Dorsolateral prefrontal cortex (tissue), 120 donors: ENCODE measurements at regions of chr1 and their contacts with region 1.

Region 1: GRCh38 chr1:156659994-156660751 is 17.0 kb downstream of the NES start:
- DNase-seq: peak; percentile 87 to 94 (median 92)
- H3K4me3 ChIP-seq: peak overlapping the region in 53 of 59 donors; percentile 5 to 64 (median 39)
- H3K27ac ChIP-seq: peak overlapping the region; percentile 65 to 97 (median 91)
- H3K27me3 ChIP-seq: peaks cover 0 to 2% (median 0%) of the 10 kb centered on the region in 45 donors
- CTCF ChIP-seq: peak; percentile 92 to 100 (median 99)

Region 2: DNA sequence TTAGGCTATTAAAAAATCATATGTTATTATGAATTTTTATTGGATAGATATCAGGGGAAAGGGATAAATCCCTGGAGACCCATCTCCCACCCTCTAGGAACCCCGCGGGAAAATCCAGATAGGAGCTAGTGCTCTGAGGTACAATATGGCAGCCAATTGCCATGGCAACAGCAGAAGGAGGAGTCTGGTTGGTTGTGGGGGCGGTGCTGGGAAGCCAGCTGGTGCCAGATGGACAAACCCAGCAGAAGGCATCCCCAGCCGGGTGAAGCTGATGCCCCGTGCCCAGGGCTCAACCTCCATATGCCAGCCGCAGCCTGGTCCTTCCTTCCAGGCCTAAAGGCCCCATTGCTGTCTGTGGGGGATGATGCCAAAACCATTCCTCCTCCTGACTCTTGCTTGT is 252.8 kb before region 1 on chr1:
- intact Hi-C with region 1: no loop called
- DNase-seq: peak; percentile 61 to 96 (median 84)
- H3K4me3 ChIP-seq: peak overlapping the region in 7 of 59 donors; percentile 7 to 40 (median 13)
- H3K27ac ChIP-seq: peak overlapping the region; percentile 51 to 100 (median 98)
- H3K27me3 ChIP-seq: no peaks in the 10 kb centered on the region
- CTCF ChIP-seq: no peak

Region 3: DNA sequence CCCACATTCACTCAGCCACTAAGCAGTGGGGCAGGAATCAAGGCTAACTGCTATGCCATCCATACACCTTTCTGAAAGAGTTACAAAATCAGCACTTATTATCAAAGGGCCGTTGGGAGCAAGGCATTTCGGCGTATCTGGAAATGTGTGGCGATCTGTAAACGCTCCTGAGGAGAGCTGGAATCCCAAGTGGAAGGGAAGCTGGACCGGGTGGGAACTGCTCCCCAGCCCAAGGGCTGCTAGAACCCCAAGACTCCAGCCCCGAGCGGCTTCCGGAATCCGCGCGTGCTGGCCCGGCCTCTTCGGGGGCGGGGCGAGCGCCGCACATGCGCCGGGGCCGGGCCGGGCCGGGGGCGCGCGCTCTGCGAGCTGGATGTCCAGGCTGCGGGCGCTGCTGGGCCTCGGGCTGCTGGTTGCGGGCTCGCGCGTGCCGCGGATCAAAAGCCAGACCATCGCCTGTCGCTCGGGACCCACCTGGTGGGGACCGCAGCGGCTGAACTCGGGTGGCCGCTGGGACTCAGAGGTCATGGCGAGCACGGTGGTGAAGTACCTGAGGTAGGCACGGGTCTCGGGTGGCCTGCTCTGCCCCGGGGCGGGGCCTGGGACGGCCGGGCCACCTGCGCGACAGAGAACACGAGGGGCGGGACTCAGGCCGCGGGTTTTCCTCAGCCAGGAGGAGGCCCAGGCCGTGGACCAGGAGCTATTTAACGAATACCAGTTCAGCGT is 68.6 kb before region 1 on chr1 and contains the start of gene NAXE:
- intact Hi-C with region 1: loop called in 1 of 2 experiments (anchors 5 kb)
- DNase-seq: peak; percentile 54 to 86 (median 75)
- H3K4me3 ChIP-seq: peak within 1 kb of the TSS; percentile 54 to 97 (median 85)
- H3K27ac ChIP-seq: peak within 1 kb of the TSS; percentile 63 to 95 (median 88)
- H3K27me3 ChIP-seq: no peaks in the 10 kb centered on the region
- CTCF ChIP-seq: peak in 15 of 56 donors; percentile 9 to 39 (median 20)
- total RNA-seq, gene NAXE: 61.2 to 124 (median 88.4) TPM

Region 4: DNA sequence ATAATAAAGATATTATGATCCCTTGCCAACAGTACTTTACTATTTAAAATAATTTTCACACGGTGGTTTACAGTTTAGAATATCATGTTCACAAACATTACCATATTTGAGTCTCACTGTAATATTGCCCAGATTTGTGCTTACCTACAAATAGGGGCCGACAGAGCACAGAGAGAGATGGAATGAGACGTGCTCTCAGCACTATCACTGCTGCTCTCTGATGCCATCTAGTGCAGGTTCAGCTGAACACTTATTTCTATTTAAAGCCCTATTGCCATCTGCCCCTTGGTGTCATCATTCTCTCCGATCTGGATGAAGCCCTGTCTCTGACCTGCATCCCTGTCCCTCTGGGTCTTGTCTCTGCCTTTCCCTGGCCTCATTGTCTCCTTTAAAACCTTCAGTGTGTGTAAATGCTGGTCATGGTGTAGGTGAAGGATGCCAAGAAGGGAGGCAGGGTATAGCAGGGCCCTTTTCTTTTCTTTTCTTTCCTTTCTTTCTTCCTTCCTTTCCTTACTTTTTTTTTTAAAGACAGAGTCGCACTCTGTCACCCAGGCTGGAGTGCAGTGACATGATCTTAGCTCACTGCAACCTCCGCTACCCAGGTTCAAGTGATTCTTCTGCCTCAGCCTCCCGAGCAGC is 52.0 kb before region 1 on chr1:
- intact Hi-C with region 1: no loop called
- DNase-seq: peak in 5 of 10 donors; percentile 42 to 74 (median 64)
- H3K4me3 ChIP-seq: peak overlapping the region in 11 of 59 donors; percentile 3 to 38 (median 12)
- H3K27ac ChIP-seq: peak overlapping the region in 57 of 59 donors; percentile 22 to 93 (median 85)
- H3K27me3 ChIP-seq: no peaks in the 10 kb centered on the region
- CTCF ChIP-seq: peak; percentile 58 to 95 (median 81)

Region 5: DNA sequence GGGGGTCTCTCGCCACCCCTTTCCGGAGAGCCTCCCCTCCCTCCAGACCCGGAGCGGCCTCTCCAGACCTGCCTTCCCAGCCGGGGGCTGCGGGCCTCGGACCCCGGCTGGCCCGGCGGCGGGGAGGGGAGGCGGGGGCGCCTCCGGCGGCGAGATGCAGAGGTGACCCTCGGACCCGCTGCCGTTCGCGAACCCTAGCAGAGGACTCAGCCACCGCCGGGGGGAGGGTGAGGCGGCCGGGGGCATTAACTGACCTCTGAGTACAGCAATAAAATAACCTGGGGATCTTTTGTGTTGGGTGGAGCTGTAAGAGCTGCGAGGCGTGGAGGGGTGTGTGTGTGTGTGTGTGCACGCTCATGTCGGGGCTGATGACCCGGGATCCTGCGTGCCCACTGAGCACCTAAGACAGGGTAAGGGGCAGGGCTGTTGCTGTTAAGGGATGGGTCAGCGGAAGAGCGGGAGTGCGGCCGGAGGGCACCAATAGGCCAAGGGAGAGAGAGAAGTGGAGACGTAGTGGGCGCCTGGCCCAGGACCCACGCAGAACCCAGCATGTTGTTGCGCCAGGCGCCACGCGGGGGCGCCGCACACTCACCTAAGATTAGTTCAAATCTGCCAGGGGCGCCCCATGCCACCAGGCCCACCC is 34.6 kb before region 1 on chr1:
- intact Hi-C with region 1: loop called (anchors 1 kb)
- DNase-seq: peak in 8 of 10 donors; percentile 61 to 73 (median 68)
- H3K4me3 ChIP-seq: peak overlapping the region in 58 of 59 donors; percentile 27 to 74 (median 56)
- H3K27ac ChIP-seq: peak overlapping the region in 55 of 59 donors; percentile 26 to 99 (median 79)
- H3K27me3 ChIP-seq: peaks cover 0 to 29% (median 0%) of the 10 kb centered on the region in 45 donors
- CTCF ChIP-seq: peak; percentile 67 to 95 (median 84)

Region 6: DNA sequence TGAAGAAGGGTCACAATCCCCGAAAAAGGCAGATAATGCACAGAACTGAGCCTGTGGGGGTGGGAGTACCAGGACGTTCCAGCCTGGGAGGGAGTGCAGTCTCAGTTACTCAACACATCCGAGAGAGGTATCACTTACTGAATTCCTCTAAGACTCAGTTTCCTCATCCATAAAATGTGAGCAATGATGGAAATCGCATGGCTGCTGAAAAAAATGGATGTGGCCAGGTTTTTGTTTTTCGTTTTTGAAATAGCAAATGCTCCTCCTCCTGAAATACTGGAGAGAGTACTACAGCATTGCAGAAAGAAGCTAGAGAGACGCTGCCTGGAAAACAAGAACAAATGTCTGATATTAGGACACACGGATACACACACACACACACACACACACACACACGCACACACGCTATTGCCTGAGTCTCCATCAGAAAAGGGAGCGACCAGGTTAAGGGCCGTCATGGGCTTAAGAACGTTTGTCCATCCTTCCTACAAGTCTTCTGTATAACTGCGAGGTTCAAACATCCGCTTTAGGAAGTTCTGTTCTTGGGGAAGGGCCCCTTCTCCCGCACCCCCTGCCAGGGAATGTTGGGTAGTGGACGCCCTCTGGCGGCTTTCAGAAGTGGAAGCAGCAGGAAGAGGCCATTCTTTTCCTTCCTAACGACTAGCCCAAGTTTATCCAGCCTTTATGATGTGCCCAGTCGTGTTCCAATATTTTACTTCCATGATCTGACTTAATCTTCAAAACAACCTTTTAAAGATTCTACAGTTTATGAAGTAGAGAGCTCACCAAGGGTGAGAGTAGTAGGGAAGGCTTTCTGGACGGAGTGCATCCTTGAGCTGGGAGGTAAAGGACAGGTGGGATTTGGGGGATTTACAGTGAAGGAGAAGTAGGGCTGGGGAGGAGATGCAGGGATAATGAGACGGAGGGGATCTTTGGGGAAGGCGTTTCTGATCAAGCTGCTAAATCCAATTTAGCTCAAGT is 17.7 kb after region 1 on chr1:
- intact Hi-C with region 1: loop called (anchors 1 kb)
- DNase-seq: peak in 8 of 10 donors; percentile 57 to 79 (median 71)
- H3K4me3 ChIP-seq: peak overlapping the region in 57 of 59 donors; percentile 20 to 68 (median 51)
- H3K27ac ChIP-seq: peak overlapping the region in 39 of 59 donors; percentile 12 to 86 (median 72)
- H3K27me3 ChIP-seq: peaks cover 0 to 13% (median 0%) of the 10 kb centered on the region in 45 donors
- CTCF ChIP-seq: peak; percentile 72 to 96 (median 92)